ENCODE measurements at regions of chr19 and their contacts with region 1.

Region 1: DNA sequence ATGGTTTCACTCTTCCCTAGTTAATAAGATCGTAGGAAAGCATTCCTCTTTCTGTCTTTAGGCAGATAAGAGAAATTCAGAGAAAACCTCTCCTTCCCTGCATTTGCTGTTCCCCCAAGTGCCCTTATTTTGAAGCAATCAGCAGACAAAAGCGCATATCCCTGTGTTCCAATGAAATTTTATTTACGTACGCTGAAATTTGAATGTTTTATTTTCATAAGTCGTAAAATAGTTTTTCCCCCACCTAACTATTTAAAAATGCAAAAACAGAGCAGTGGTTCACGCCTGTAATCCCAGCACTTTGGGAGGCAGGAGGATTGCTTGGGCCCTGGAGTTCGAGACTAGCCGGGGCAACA is 17.2 kb upstream of the MRI1 start:
- DNase-seq: no peak
- H3K4me3 ChIP-seq: peak overlapping the region; percentile 62 to 100 (median 89)
- H3K27ac ChIP-seq: peak overlapping the region in 47 of 59 donors; percentile 9 to 93 (median 81)
- H3K27me3 ChIP-seq: no peaks in the 10 kb centered on the region
- CTCF ChIP-seq: no peak

Region 2: DNA sequence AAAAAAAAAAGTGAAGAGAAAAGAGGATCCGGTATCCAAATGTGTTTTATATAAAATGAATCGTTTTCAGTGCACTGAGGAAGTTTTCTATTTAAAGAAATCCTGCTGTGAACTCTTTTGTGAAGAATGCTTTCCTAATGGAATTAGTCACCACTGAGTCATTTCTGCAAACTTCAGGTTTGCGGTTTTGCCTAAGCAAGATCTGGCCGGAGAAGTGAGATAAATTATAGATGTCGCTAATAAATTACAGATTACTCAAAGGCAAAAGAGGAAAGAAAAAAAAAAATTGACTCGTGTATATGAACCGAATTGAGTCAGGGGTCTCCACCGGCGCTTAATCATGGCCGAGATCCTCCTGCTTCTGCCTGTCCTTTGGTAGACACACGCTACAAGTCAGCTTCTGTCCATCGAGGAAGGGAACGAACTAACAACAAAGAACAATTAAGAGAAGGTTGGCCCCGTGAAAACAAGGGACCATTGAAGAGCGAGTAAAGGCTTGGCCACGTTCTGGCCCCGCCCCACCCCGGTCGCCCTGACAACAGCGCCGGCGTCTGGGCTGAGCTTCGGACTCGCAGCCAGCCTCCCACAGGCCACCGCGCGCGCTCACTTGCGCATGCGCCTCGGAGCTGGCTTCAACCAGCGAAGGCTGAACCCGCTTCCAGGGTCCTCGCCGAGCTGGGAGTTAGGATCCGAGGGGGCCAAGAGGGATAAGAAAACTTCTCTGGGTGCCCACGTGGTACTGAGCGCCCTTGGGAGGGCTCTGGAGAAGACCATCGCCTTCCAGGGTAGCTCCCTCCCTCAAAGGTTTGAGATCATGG is 15.7 kb before region 1 on chr19:
- intact Hi-C with region 1: loop called in 1 of 2 experiments (anchors 2 kb)
- DNase-seq: peak; percentile 96 to 99 (median 97)
- H3K4me3 ChIP-seq: peak overlapping the region; percentile 51 to 98 (median 70)
- H3K27ac ChIP-seq: peak overlapping the region; percentile 81 to 99 (median 95)
- H3K27me3 ChIP-seq: no peaks in the 10 kb centered on the region
- CTCF ChIP-seq: peak in 30 of 56 donors; percentile 5 to 55 (median 30)

Region 3: GRCh38 chr19:13784731-13785452 is 37.8 kb after region 1 on chr19:
- intact Hi-C with region 1: no loop called
- DNase-seq: peak in 9 of 10 donors; percentile 33 to 79 (median 56)
- H3K4me3 ChIP-seq: peak overlapping the region in 22 of 59 donors; percentile 5 to 47 (median 22)
- H3K27ac ChIP-seq: peak overlapping the region in 2 of 59 donors; percentile 2 to 9
- H3K27me3 ChIP-seq: no peaks in the 10 kb centered on the region
- CTCF ChIP-seq: peak; percentile 22 to 82 (median 66)